Cardiac septum (tissue), 1 donor: ENCODE measurements at regions of chr18 and their contacts with region 1.

Region 1: GRCh38 chr18:76398896-76399612 is 96.0 kb downstream of the ZNF516 start:
- DNase-seq: peak; percentile 94

Region 2: GRCh38 chr18:76259096-76259495 is 140.0 kb before region 1 on chr18:
- intact Hi-C with region 1: no loop called
- DNase-seq: no peak

Region 3: DNA sequence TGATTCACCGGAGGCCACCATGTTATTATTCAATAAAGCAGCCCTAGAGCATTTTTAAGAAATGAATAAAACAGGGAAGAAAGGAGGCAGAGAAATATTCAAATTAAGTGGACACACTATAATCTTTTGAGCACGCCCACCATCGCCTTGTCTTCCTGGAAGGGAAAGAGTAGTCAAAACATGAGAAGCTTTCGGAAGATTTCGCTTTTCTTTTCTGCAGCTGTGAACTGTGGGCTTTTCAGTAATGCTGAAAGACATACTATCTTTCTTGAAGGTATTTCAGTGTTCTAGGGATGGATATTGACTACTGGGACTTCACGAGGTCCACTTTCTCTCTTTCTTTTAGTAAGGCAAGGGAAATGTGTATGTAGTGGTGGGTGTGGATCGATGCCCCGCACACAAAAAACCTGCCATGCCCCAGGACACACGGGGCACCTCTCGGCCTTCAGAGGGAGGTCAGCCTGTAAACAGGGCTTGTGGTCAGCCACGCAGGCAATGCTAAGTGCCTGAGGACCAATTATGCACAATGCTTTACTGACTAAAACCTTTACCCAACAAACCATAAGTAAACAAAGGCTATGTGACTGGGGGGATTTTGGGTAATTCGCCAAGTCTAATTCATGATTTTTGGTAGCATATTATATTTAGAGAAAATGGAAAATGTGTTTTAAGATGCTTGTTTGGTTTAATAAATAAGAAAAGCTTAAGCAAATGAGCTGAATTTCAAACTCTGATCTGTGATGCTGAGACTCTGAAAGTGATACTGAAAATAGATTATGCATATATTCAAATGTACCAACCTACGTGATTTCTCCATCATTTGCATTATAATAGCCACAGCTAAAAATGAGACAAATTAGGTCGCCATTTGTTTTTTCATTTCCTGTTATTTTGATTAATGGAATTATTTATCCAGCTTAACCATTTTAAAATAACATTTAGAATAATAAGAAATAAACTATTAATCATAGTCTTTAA is 34.5 kb before region 1 on chr18:
- intact Hi-C with region 1: no loop called
- DNase-seq: peak; percentile 39

Region 4: GRCh38 chr18:76620321-76621170 is 221.5 kb after region 1 on chr18:
- intact Hi-C with region 1: loop called (anchors 5 kb)
- DNase-seq: peak; percentile 84

Region 5: GRCh38 chr18:76689646-76690264 is 290.7 kb after region 1 on chr18:
- intact Hi-C with region 1: loop called (anchors 2 kb)
- DNase-seq: no peak

Region 6: DNA sequence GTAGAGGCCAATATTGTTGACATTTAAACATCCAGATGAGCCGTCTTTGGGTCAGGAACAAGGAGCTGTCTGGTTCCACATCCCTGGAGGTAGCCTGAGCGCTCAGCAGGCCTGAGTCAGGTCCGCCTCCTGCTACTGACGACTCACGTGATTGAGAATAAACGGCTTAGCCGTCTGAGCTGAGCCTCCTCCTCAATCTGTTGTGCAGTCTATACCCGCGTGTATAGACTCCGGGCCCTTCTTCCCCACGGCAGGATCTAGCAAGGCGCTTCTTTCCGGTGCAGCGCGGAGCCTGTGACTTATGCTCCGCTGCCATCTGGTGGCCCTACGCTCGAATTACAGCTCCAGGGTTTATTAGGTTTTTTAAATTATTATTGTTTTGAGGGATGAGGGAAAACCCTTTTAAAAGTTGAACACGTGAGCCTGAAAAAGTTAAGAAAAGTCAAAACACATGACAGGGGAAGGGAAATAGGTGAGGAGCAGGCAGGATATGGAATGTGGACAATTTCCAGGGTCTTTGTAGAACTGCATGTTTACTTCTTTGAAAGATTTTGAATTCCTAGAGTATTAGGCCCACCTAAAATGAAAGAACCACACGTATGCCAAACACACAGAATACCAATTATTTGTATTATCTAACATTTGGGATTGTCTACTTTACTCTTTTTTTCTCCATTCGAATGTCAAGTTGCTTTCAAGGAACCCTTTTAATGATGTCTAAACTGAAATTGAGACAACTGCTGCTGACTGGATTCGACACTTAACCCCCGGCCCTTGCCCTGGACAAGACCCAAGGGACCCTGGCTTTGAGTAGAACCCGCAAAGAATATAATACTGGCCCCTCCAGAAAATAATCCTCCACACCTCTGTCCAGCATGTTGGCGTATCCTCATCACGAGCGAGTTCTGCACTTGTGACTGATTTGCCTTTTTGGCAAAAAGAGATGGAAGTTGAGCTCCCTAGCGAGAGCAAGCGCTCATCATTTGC is 310.9 kb after region 1 on chr18:
- intact Hi-C with region 1: loop called (anchors 2 kb)
- DNase-seq: no peak